ENCODE measurements at regions of chr15 and their contacts with region 1.

Region 1: GRCh38 chr15:33737687-33738601 is 230.4 kb upstream of the CHRM5 start:
- DNase-seq: peak in 2 of 10 donors; percentile 10 to 26
- H3K4me3 ChIP-seq: peak overlapping the region in 18 of 59 donors; percentile 0 to 50 (median 22)
- H3K27ac ChIP-seq: no peak overlapping the region
- H3K27me3 ChIP-seq: no peaks in the 10 kb centered on the region
- CTCF ChIP-seq: peak; percentile 37 to 84 (median 74)

Region 2: GRCh38 chr15:33467816-33468163 is 270.2 kb before region 1 on chr15:
- intact Hi-C with region 1: no loop called
- DNase-seq: no peak
- H3K4me3 ChIP-seq: no peak overlapping the region
- H3K27ac ChIP-seq: no peak overlapping the region
- H3K27me3 ChIP-seq: peaks cover 0 to 4% (median 0%) of the 10 kb centered on the region in 45 donors
- CTCF ChIP-seq: no peak

Region 3: DNA sequence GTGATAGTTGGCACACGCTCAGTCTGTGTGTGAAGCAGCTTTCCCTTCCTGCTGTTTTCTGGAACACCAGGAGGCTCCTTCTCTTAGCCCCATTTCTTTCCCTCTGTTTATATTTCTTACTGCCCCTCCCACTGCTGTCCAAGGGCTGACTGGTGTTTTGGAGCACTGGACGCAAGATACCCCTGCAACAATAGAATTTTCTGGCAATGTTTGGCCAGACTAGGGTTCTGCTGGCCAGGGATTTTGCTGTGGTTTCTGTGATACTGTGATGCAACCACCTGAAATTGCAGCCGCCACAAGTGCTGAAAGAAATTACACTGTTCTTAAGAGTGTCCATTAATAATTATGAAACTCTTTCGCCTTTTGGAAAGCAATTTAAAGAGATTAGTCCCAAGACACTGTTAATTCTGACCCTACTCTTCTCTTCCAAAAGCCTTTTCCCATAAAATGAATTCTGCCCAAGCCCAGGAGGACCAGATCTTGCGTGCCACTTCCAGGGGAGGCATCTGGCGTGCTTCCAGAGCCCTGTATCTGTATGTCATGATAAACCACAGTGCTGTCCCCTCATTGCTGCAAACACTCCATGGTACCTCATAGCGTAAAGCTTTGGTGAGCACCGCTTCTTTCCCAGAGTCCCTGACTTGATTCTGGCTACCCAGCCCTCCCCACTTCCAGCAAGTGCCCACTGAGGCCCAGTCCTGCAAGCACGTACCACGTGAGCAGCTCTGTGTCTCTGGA is 70.9 kb after region 1 on chr15:
- intact Hi-C with region 1: no loop called
- DNase-seq: no peak
- H3K4me3 ChIP-seq: no peak overlapping the region
- H3K27ac ChIP-seq: no peak overlapping the region
- H3K27me3 ChIP-seq: no peaks in the 10 kb centered on the region
- CTCF ChIP-seq: no peak

Region 4: GRCh38 chr15:33963831-33964664 is 226.1 kb after region 1 on chr15:
- intact Hi-C with region 1: loop called (anchors 5 to 10 kb)
- DNase-seq: no peak
- H3K4me3 ChIP-seq: no peak overlapping the region
- H3K27ac ChIP-seq: no peak overlapping the region
- H3K27me3 ChIP-seq: no peaks in the 10 kb centered on the region
- CTCF ChIP-seq: peak; percentile 18 to 75 (median 56)

Region 5: GRCh38 chr15:33980159-33980558 is 242.2 kb after region 1 on chr15:
- intact Hi-C with region 1: loop called in 1 of 2 experiments (anchors 5 kb)
- DNase-seq: no peak
- H3K4me3 ChIP-seq: no peak overlapping the region
- H3K27ac ChIP-seq: peak overlapping the region in 2 of 59 donors; percentile 30 to 99
- H3K27me3 ChIP-seq: no peaks in the 10 kb centered on the region
- CTCF ChIP-seq: no peak

Region 6: DNA sequence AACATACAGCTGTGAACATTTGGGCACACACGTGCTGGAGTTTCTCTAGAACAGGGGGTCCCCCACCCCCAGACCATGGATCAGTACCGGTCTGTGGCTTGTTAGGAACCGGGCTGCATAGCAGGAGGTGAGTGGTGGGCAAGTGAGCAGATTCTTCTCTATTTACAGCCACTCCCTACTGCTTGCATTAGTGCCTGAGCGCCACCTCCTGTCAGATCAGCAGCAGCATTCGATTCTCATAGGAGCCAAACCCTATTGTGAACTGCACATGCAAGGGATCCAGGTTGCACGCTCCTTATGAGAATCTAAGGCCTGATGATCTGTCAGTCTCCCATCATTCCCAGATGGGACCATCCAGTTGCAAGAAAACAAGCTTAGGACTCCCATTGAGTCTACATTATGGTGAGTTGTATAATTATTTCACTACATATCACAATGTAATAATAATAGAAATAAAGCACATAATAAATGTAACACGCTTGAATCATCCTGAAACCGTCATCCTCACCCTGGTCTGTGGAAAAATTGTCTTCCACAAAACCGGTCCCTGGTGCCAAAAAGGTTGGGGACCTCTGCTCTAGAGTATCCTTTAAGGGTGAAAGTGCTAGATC is 256.2 kb after region 1 on chr15:
- intact Hi-C with region 1: loop called in 1 of 2 experiments (anchors 10 kb)
- DNase-seq: peak in 1 of 10 donors; percentile 53
- H3K4me3 ChIP-seq: no peak overlapping the region
- H3K27ac ChIP-seq: peak overlapping the region in 5 of 59 donors; percentile 12 to 45 (median 20)
- H3K27me3 ChIP-seq: no peaks in the 10 kb centered on the region
- CTCF ChIP-seq: peak in 24 of 56 donors; percentile 12 to 60 (median 33)

Region 7: GRCh38 chr15:34049112-34049511 is 311.2 kb after region 1 on chr15:
- intact Hi-C with region 1: loop called in 1 of 2 experiments (anchors 10 kb)
- DNase-seq: no peak
- H3K4me3 ChIP-seq: no peak overlapping the region
- H3K27ac ChIP-seq: no peak overlapping the region
- H3K27me3 ChIP-seq: no peaks in the 10 kb centered on the region
- CTCF ChIP-seq: no peak